ENCODE measurements at regions of chr3 and their contacts with region 1.

Region 1: DNA sequence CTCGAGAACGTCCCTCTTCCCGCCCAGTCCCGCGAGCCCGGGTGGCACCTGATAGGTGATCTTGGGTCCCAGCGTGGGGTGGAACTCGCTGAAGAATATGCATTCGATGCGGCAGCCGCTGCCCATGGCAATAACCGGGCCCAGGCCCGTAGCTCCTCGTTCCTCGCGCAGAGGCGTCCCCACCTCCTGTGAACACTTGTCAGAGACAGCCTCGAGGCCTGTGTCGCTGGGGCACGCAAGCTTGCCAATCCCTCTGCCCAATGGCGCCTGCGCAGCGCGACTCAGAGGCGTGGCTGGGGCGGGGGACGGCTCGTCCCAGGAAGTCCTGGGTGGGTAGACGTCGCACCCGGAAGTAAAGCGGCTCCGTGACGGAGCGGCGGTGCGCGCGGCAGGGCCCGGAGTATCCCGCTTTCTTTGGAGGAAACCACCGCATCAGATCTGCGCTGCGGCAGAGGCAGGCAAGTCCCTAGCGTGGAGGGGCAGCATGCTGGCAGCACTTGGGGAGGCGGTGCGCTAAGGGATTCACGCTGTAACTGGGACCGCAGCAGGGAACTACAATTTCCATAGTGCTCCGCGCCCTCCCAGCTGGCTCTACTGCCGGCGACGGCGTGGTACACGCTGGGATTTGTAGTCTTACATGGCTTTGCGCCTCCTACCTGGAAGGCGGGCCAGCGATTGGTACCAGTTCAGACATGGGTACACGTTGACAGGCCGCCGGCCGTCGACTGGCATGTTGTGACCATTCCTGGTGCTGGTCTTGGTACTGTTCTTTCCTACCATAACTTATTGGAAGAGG is at the starts of genes CYB561D2 and NPRL2:
- DNase-seq: peak; percentile 97 to 100 (median 99)
- ATAC-seq: peak; percentile 95
- H3K4me3 ChIP-seq: peak within 1 kb of the TSS; percentile 90
- H3K4me3 Mint-ChIP-seq: peak within 1 kb of the TSS; percentile 86 to 99 (median 96)
- H3K27ac ChIP-seq: peak within 1 kb of the TSS; percentile 93
- H3K27ac Mint-ChIP-seq: peak within 1 kb of the TSS; percentile 96 to 100 (median 99)
- H3K4me1 ChIP-seq: peaks cover 26 to 32% of the 10 kb centered on the region in 2 donors
- H3K4me1 Mint-ChIP-seq: peaks cover 24 to 78% (median 59%) of the 10 kb centered on the region in 7 donors
- H3K27me3 ChIP-seq: no peaks in the 10 kb centered on the region
- H3K27me3 Mint-ChIP-seq: no peaks in the 10 kb centered on the region
- total RNA-seq, gene CYB561D2: 23.3 to 42.6 (median 32.8) TPM
- total RNA-seq, gene NPRL2: 35.3 to 48.9 (median 47.7) TPM

Region 2: GRCh38 chr3:50235716-50236496 is 114.8 kb before region 1 on chr3 and contains the start of gene GNAI2:
- CTCF ChIA-PET with region 1: no interaction called
- POLR2A ChIA-PET with region 1: interaction called, 6 read pairs
- intact Hi-C with region 1: loop called in 1 of 2 experiments (anchors 5 kb)
- DNase-seq: peak; percentile 95 to 99 (median 99)
- ATAC-seq: peak; percentile 93
- H3K4me3 ChIP-seq: peak within 1 kb of the TSS; percentile 90
- H3K4me3 Mint-ChIP-seq: peak within 1 kb of the TSS; percentile 92 to 99 (median 98)
- H3K27ac ChIP-seq: peak within 1 kb of the TSS; percentile 84
- H3K27ac Mint-ChIP-seq: peak within 1 kb of the TSS; percentile 87 to 97 (median 95)
- H3K4me1 ChIP-seq: peaks cover 30 to 35% of the 10 kb centered on the region in 2 donors
- H3K4me1 Mint-ChIP-seq: peaks cover 12 to 41% (median 37%) of the 10 kb centered on the region in 7 donors
- H3K27me3 ChIP-seq: no peaks in the 10 kb centered on the region
- H3K27me3 Mint-ChIP-seq: no peaks in the 10 kb centered on the region
- total RNA-seq, gene GNAI2: 225 to 442 (median 282) TPM

Region 3: GRCh38 chr3:50327943-50328691 is 22.6 kb before region 1 on chr3 and contains the start of gene TUSC2:
- CTCF ChIA-PET with region 1: interaction called, 3 read pairs
- POLR2A ChIA-PET with region 1: interaction called, 656 read pairs
- intact Hi-C with region 1: loop called in 1 of 2 experiments (anchors 1 kb)
- DNase-seq: peak; percentile 83 to 94 (median 92)
- ATAC-seq: peak; percentile 97
- H3K4me3 ChIP-seq: peak within 1 kb of the TSS; percentile 89
- H3K4me3 Mint-ChIP-seq: peak within 1 kb of the TSS; percentile 84 to 97 (median 95)
- H3K27ac ChIP-seq: peak within 1 kb of the TSS; percentile 92
- H3K27ac Mint-ChIP-seq: peak within 1 kb of the TSS; percentile 85 to 96 (median 94)
- H3K4me1 ChIP-seq: peaks cover 12 to 15% of the 10 kb centered on the region in 2 donors
- H3K4me1 Mint-ChIP-seq: peaks cover 7 to 41% (median 29%) of the 10 kb centered on the region in 7 donors
- H3K27me3 ChIP-seq: no peaks in the 10 kb centered on the region
- H3K27me3 Mint-ChIP-seq: no peaks in the 10 kb centered on the region
- total RNA-seq, gene TUSC2: 16.8 to 25.0 (median 20.5) TPM

Region 4: GRCh38 chr3:50365080-50365841 is 14.5 kb after region 1 on chr3:
- CTCF ChIA-PET with region 1: interaction called, 4 read pairs
- POLR2A ChIA-PET with region 1: interaction called, 656 read pairs
- intact Hi-C with region 1: loop called (anchors 1 to 2 kb)
- DNase-seq: peak; percentile 82 to 96 (median 94)
- ATAC-seq: peak; percentile 97
- H3K4me3 ChIP-seq: peak overlapping the region; percentile 99
- H3K4me3 Mint-ChIP-seq: peak overlapping the region; percentile 82 to 93 (median 90)
- H3K27ac ChIP-seq: peak overlapping the region; percentile 95
- H3K27ac Mint-ChIP-seq: peak overlapping the region; percentile 87 to 97 (median 94)
- H3K4me1 ChIP-seq: peaks cover 13 to 18% of the 10 kb centered on the region in 2 donors
- H3K4me1 Mint-ChIP-seq: peaks cover 8 to 36% (median 20%) of the 10 kb centered on the region in 7 donors
- H3K27me3 ChIP-seq: no peaks in the 10 kb centered on the region
- H3K27me3 Mint-ChIP-seq: no peaks in the 10 kb centered on the region

Region 5: GRCh38 chr3:50542177-50543034 is 191.7 kb after region 1 on chr3:
- CTCF ChIA-PET with region 1: interaction called, 21 read pairs
- POLR2A ChIA-PET with region 1: no interaction called
- intact Hi-C with region 1: loop called in 1 of 2 experiments (anchors 1 kb)
- DNase-seq: peak; percentile 22 to 68 (median 44)
- ATAC-seq: peak; percentile 81
- H3K4me3 ChIP-seq: no peak overlapping the region
- H3K4me3 Mint-ChIP-seq: no peak overlapping the region
- H3K27ac ChIP-seq: no peak overlapping the region
- H3K27ac Mint-ChIP-seq: no peak overlapping the region
- H3K4me1 ChIP-seq: no peaks in the 10 kb centered on the region
- H3K4me1 Mint-ChIP-seq: peaks cover 0 to 5% (median 0%) of the 10 kb centered on the region in 7 donors
- H3K27me3 ChIP-seq: no peaks in the 10 kb centered on the region
- H3K27me3 Mint-ChIP-seq: peaks cover 0 to 36% (median 0%) of the 10 kb centered on the region in 5 donors

Region 6: DNA sequence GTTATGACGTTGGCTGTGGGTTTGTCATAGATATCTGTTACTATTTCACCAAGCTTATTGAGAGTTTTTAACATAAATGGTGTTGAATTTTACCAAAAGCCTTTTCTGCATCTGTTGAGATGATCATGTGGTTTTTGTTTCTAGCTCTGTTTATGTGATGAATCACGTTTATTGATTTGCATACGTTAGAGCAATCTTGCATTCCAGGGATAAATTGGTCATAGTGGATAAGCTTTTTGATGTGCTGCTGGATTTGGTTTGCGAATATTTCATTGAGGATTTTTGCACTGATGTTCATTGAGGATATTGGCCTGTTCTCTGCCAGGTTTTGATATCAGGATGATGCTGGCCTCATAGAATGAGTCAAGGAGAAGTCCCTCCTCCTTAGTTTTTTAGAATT is 441.8 kb after region 1 on chr3:
- CTCF ChIA-PET with region 1: no interaction called
- POLR2A ChIA-PET with region 1: no interaction called
- intact Hi-C with region 1: no loop called
- DNase-seq: no peak
- ATAC-seq: no peak
- H3K4me3 ChIP-seq: no peak overlapping the region
- H3K4me3 Mint-ChIP-seq: no peak overlapping the region
- H3K27ac ChIP-seq: no peak overlapping the region
- H3K27ac Mint-ChIP-seq: no peak overlapping the region
- H3K4me1 ChIP-seq: no peaks in the 10 kb centered on the region
- H3K4me1 Mint-ChIP-seq: no peaks in the 10 kb centered on the region
- H3K27me3 ChIP-seq: no peaks in the 10 kb centered on the region
- H3K27me3 Mint-ChIP-seq: peaks cover 0 to 7% (median 4%) of the 10 kb centered on the region in 5 donors